ENCODE measurements at regions of chr22 and their contacts with region 1.

Region 1: GRCh38 chr22:19432133-19432851 is at the start of gene MRPL40:
- DNase-seq: peak; percentile 83
- ATAC-seq: peak; percentile 87
- H3K4me3 Mint-ChIP-seq: peak within 1 kb of the TSS; percentile 90
- H3K27ac Mint-ChIP-seq: peak within 1 kb of the TSS; percentile 91
- H3K4me1 Mint-ChIP-seq: peaks cover 59% of the 10 kb centered on the region
- H3K27me3 Mint-ChIP-seq: no peaks in the 10 kb centered on the region
- CTCF ChIP-seq: no peak
- total RNA-seq, gene MRPL40: 24.0 and 24.3 TPM in 2 replicates

Region 2: GRCh38 chr22:19167106-19167869 is 265.0 kb before region 1 on chr22:
- CTCF ChIA-PET with region 1: no interaction called
- POLR2A ChIA-PET with region 1: no interaction called
- intact Hi-C with region 1: no loop called
- DNase-seq: no peak
- ATAC-seq: no peak
- H3K4me3 Mint-ChIP-seq: no peak overlapping the region
- H3K27ac Mint-ChIP-seq: no peak overlapping the region
- H3K4me1 Mint-ChIP-seq: peaks cover 25% of the 10 kb centered on the region
- H3K27me3 Mint-ChIP-seq: peaks cover 30% of the 10 kb centered on the region
- CTCF ChIP-seq: no peak

Region 3: GRCh38 chr22:19447388-19448075 is 15.2 kb after region 1 on chr22 and contains the start of gene C22orf39:
- CTCF ChIA-PET with region 1: interaction called, 4 read pairs
- POLR2A ChIA-PET with region 1: interaction called, 92 read pairs
- intact Hi-C with region 1: loop called (anchors 1 kb)
- DNase-seq: peak; percentile 78
- ATAC-seq: peak; percentile 85
- H3K4me3 Mint-ChIP-seq: peak within 1 kb of the TSS; percentile 95
- H3K27ac Mint-ChIP-seq: peak within 1 kb of the TSS; percentile 98
- H3K4me1 Mint-ChIP-seq: peaks cover 31% of the 10 kb centered on the region
- H3K27me3 Mint-ChIP-seq: no peaks in the 10 kb centered on the region
- CTCF ChIP-seq: no peak
- total RNA-seq, gene C22orf39: 35.7 and 43.0 TPM in 2 replicates

Region 4: GRCh38 chr22:19795617-19796008 is 363.3 kb after region 1 on chr22:
- CTCF ChIA-PET with region 1: no interaction called
- POLR2A ChIA-PET with region 1: no interaction called
- intact Hi-C with region 1: no loop called
- DNase-seq: no peak
- ATAC-seq: no peak
- H3K4me3 Mint-ChIP-seq: no peak overlapping the region
- H3K27ac Mint-ChIP-seq: no peak overlapping the region
- H3K4me1 Mint-ChIP-seq: no peaks in the 10 kb centered on the region
- H3K27me3 Mint-ChIP-seq: no peaks in the 10 kb centered on the region
- CTCF ChIP-seq: no peak

Measured in activated B cell treated with CpG ODN at 0.5 μM for 24 hours (primary cell).